ENCODE measurements at regions of chr1 and their contacts with region 1.

Region 1: DNA sequence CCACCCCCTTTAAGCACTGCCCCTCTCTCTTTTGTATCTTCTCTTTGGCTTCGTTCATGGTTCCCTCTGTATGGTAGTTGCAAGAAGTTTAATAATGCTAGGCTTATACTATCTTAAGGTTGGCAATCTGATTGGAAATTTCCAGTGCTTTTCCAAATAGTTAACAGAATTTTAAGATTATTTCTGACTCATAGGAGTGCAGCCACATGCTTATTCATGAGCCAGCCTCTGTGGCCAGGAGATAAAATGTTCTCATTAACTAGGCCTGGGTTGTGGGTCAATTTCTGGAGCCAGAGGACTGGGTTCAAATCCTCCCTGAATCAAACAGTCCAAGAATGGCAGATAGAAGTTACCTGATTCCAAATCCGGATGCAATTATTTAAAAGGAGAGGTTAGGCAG is 103.1 kb downstream of the ATP6V1G3 start:
- DNase-seq: no peak
- ATAC-seq: no peak
- H3K4me3 ChIP-seq: no peak overlapping the region
- H3K4me3 Mint-ChIP-seq: no peak overlapping the region
- H3K27ac ChIP-seq: no peak overlapping the region
- H3K27ac Mint-ChIP-seq: no peak overlapping the region
- H3K4me1 ChIP-seq: no peaks in the 10 kb centered on the region
- H3K4me1 Mint-ChIP-seq: no peaks in the 10 kb centered on the region
- H3K27me3 ChIP-seq: no peaks in the 10 kb centered on the region
- H3K27me3 Mint-ChIP-seq: peaks cover 17% of the 10 kb centered on the region
- CTCF ChIP-seq: no peak

Region 2: DNA sequence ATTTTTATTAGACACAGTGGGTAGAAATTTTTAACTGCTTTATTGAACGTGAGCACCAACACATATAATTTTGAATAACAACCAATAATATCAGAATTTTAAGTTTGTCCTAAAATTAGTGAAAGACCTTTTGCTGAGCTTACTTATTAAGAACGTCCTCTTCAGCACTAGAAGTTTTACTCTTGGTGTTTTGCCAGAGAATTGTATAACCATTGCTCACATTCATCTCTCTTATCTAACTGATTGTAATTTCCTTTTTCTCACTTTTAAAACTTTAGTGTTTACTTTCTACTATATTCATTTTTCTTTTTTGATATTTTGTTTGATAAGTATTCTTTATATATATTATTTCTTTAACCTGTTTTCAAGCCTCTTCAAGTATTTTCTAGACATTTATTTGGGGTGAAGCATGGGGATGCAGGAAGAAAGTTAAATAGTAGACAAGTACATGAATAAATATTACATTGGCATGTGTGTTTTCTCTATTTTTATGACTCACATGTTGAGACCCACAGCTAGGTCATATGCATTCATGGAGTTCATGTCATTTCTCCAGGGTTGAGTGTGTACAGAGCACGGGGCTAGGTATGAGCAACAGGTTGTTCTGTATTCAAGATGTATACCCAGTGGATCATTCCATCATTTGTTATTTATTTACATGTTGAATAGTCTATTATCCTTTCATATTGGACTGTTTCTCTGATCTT is 12.5 kb after region 1 on chr1:
- CTCF ChIA-PET with region 1: no interaction called
- POLR2A ChIA-PET with region 1: interaction called, 11 read pairs
- intact Hi-C with region 1: no loop called
- DNase-seq: no peak
- ATAC-seq: no peak
- H3K4me3 ChIP-seq: no peak overlapping the region
- H3K4me3 Mint-ChIP-seq: no peak overlapping the region
- H3K27ac ChIP-seq: no peak overlapping the region
- H3K27ac Mint-ChIP-seq: no peak overlapping the region
- H3K4me1 ChIP-seq: no peaks in the 10 kb centered on the region
- H3K4me1 Mint-ChIP-seq: no peaks in the 10 kb centered on the region
- H3K27me3 ChIP-seq: no peaks in the 10 kb centered on the region
- H3K27me3 Mint-ChIP-seq: no peaks in the 10 kb centered on the region
- CTCF ChIP-seq: no peak